HCT116 (cell line): ENCODE measurements at regions of chr9 and their contacts with region 1.

Region 1: GRCh38 chr9:105157130-105157583 is 87.3 kb upstream of the SLC44A1 start:
- DNase-seq: peak; percentile 24
- ATAC-seq: peak; percentile 88
- H3K4me3 ChIP-seq: no peak overlapping the region
- H3K27ac ChIP-seq: no peak overlapping the region
- H3K4me1 ChIP-seq: peaks cover 4 to 13% of the 10 kb centered on the region in 2 experiments; a peak in 3 of 4 replicates
- H3K27me3 ChIP-seq: no peaks in the 10 kb centered on the region
- CTCF ChIP-seq: peak; percentile 27 to 64 (median 56); a peak in 4 of 6 replicates
- POLR2A ChIP-seq: no peak
- RAD21 ChIP-seq: peak; percentile 80

Region 2: GRCh38 chr9:104633976-104634520 is 523.1 kb before region 1 on chr9:
- CTCF ChIA-PET with region 1: no interaction called
- POLR2A ChIA-PET with region 1: no interaction called
- RAD21 ChIA-PET with region 1: no interaction called
- intact Hi-C with region 1: no loop called
- DNase-seq: no peak
- ATAC-seq: no peak
- H3K4me3 ChIP-seq: no peak overlapping the region
- H3K27ac ChIP-seq: no peak overlapping the region
- H3K4me1 ChIP-seq: no peaks in the 10 kb centered on the region
- H3K27me3 ChIP-seq: 0 out of 2 replicates have a peak, but pooled peaks cover 6% of the 10 kb centered on the region
- CTCF ChIP-seq: no peak
- POLR2A ChIP-seq: no peak
- RAD21 ChIP-seq: no peak

Region 3: DNA sequence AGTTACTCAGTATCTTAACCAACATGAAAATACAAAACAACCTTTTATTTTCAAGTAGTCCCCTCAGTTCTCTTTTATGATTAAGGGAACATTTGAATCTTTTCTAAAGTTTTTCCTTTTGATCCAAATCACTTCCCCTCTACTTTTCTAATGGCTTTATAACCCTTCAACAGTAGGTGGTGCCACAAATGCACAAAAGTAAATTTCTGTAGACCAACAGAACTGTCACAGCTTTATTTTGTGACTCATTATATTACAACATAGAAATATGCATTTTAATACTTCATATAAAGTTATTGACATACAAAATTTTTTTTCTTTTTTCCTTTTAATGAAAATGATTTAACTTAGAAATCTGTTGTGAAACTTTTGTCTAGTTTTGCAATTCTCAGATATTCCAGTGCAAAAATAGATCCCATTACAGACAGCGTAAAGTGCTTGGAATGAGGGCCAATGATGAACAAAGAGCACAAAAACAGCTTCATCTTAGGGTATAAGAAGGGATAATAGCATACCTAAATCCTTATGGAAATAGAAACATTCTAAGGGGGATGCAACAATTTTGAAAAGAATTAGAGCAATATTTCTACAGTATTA is 376.3 kb before region 1 on chr9:
- CTCF ChIA-PET with region 1: interaction called, 5 read pairs
- POLR2A ChIA-PET with region 1: no interaction called
- RAD21 ChIA-PET with region 1: no interaction called
- intact Hi-C with region 1: loop called (anchors 1 kb)
- DNase-seq: peak; percentile 16
- ATAC-seq: peak; percentile 57
- H3K4me3 ChIP-seq: no peak overlapping the region
- H3K27ac ChIP-seq: no peak overlapping the region
- H3K4me1 ChIP-seq: no peaks in the 10 kb centered on the region
- H3K27me3 ChIP-seq: 0 out of 2 replicates have a peak, but pooled peaks cover 4% of the 10 kb centered on the region
- CTCF ChIP-seq: peak; percentile 47 to 59 (median 50); a peak in 5 of 6 replicates
- POLR2A ChIP-seq: no peak
- RAD21 ChIP-seq: peak; percentile 71

Region 4: GRCh38 chr9:104863180-104863883 is 293.8 kb before region 1 on chr9:
- CTCF ChIA-PET with region 1: interaction called, 5 read pairs
- POLR2A ChIA-PET with region 1: no interaction called
- RAD21 ChIA-PET with region 1: interaction called in 1 of 2 experiments, 4 read pairs
- intact Hi-C with region 1: loop called (anchors 1 kb)
- DNase-seq: peak; percentile 44
- ATAC-seq: peak; percentile 89
- H3K4me3 ChIP-seq: no peak overlapping the region
- H3K27ac ChIP-seq: no peak overlapping the region
- H3K4me1 ChIP-seq: peaks cover 0 to under 1% of the 10 kb centered on the region in 2 experiments; a peak in 1 of 4 replicates
- H3K27me3 ChIP-seq: no peaks in the 10 kb centered on the region
- CTCF ChIP-seq: peak; percentile 81 to 92 (median 82); a peak in 5 of 6 replicates
- POLR2A ChIP-seq: no peak
- RAD21 ChIP-seq: peak; percentile 91

Region 5: GRCh38 chr9:104927912-104928740 is 229.0 kb before region 1 on chr9 and contains the start of gene ABCA1:
- CTCF ChIA-PET with region 1: interaction called, 6 read pairs
- POLR2A ChIA-PET with region 1: no interaction called
- RAD21 ChIA-PET with region 1: no interaction called
- intact Hi-C with region 1: loop called (anchors 1 kb)
- DNase-seq: peak; percentile 29
- ATAC-seq: peak; percentile 50
- H3K4me3 ChIP-seq: peak within 1 kb of the TSS; percentile 49 to 57
- H3K27ac ChIP-seq: peak within 1 kb of the TSS; percentile 33; the same call in 1 of the 2 replicates
- H3K4me1 ChIP-seq: peaks cover 6 to 18% of the 10 kb centered on the region in 2 experiments
- H3K27me3 ChIP-seq: no peaks in the 10 kb centered on the region
- CTCF ChIP-seq: no peak
- POLR2A ChIP-seq: no peak
- RAD21 ChIP-seq: no peak
- total RNA-seq, gene ABCA1: 0.89 TPM

Region 6: GRCh38 chr9:105557771-105558610 is 400.8 kb after region 1 on chr9 and contains the start of gene FKTN:
- CTCF ChIA-PET with region 1: no interaction called
- POLR2A ChIA-PET with region 1: no interaction called
- RAD21 ChIA-PET with region 1: no interaction called
- intact Hi-C with region 1: loop called (anchors 10 kb)
- DNase-seq: peak; percentile 64
- ATAC-seq: peak; percentile 96
- H3K4me3 ChIP-seq: peak within 1 kb of the TSS; percentile 80 to 86
- H3K27ac ChIP-seq: peak within 1 kb of the TSS; percentile 28; the same call in 1 of the 2 replicates
- H3K4me1 ChIP-seq: peaks cover 3 to 12% of the 10 kb centered on the region in 2 experiments; a peak in 3 of 4 replicates
- H3K27me3 ChIP-seq: no peaks in the 10 kb centered on the region
- CTCF ChIP-seq: no peak
- POLR2A ChIP-seq: peak; percentile 34
- RAD21 ChIP-seq: no peak
- total RNA-seq, gene FKTN: 17.3 TPM